Naive thymus-derived CD4-positive, alpha-beta T cell (primary cell): ENCODE measurements at regions of chr22 and their contacts with region 1.

Region 1: GRCh38 chr22:37121887-37122591 is 12.5 kb upstream of the TMPRSS6 start:
- DNase-seq: peak; percentile 62 to 98 (median 94)
- ATAC-seq: peak; percentile 99
- H3K4me3 ChIP-seq: peak overlapping the region; percentile 30
- H3K4me3 Mint-ChIP-seq: peak overlapping the region; percentile 69 to 91 (median 79)
- H3K27ac ChIP-seq: peak overlapping the region; percentile 96
- H3K27ac Mint-ChIP-seq: peak overlapping the region; percentile 95 to 100 (median 98)
- H3K4me1 ChIP-seq: peaks cover 21 to 30% of the 10 kb centered on the region in 2 donors
- H3K4me1 Mint-ChIP-seq: peaks cover 19 to 86% (median 65%) of the 10 kb centered on the region in 7 donors
- H3K27me3 ChIP-seq: no peaks in the 10 kb centered on the region
- H3K27me3 Mint-ChIP-seq: peaks cover 0 to 2% (median 0%) of the 10 kb centered on the region in 5 donors

Region 2: GRCh38 chr22:37051391-37052385 is 70.4 kb before region 1 on chr22 and contains the start of gene KCTD17:
- CTCF ChIA-PET with region 1: no interaction called
- POLR2A ChIA-PET with region 1: no interaction called
- intact Hi-C with region 1: loop called in 1 of 2 experiments (anchors 2 kb)
- DNase-seq: peak; percentile 50 to 87 (median 67)
- ATAC-seq: peak; percentile 99
- H3K4me3 ChIP-seq: peak within 1 kb of the TSS; percentile 74
- H3K4me3 Mint-ChIP-seq: peak within 1 kb of the TSS; percentile 73 to 94 (median 86)
- H3K27ac ChIP-seq: peak within 1 kb of the TSS; percentile 72
- H3K27ac Mint-ChIP-seq: peak within 1 kb of the TSS in 8 of 9 donors; percentile 40 to 89 (median 80)
- H3K4me1 ChIP-seq: peaks cover 0 to 7% of the 10 kb centered on the region in 2 donors
- H3K4me1 Mint-ChIP-seq: peaks cover 5 to 15% (median 14%) of the 10 kb centered on the region in 7 donors
- H3K27me3 ChIP-seq: no peaks in the 10 kb centered on the region
- H3K27me3 Mint-ChIP-seq: no peaks in the 10 kb centered on the region
- total RNA-seq, gene KCTD17: 19.8 to 44.5 (median 24.9) TPM

Region 3: GRCh38 chr22:37098976-37099591 is 23.0 kb before region 1 on chr22:
- CTCF ChIA-PET with region 1: no interaction called
- POLR2A ChIA-PET with region 1: interaction called, 3 read pairs
- intact Hi-C with region 1: loop called in 1 of 2 experiments (anchors 1 kb)
- DNase-seq: no peak
- ATAC-seq: peak; percentile 48
- H3K4me3 ChIP-seq: no peak overlapping the region
- H3K4me3 Mint-ChIP-seq: no peak overlapping the region
- H3K27ac ChIP-seq: no peak overlapping the region
- H3K27ac Mint-ChIP-seq: peak overlapping the region in 5 of 9 donors; percentile 2 to 68 (median 41)
- H3K4me1 ChIP-seq: no peaks in the 10 kb centered on the region
- H3K4me1 Mint-ChIP-seq: peaks cover 0 to 38% (median 10%) of the 10 kb centered on the region in 7 donors
- H3K27me3 ChIP-seq: no peaks in the 10 kb centered on the region
- H3K27me3 Mint-ChIP-seq: peaks cover 0 to 27% (median 12%) of the 10 kb centered on the region in 5 donors

Region 4: DNA sequence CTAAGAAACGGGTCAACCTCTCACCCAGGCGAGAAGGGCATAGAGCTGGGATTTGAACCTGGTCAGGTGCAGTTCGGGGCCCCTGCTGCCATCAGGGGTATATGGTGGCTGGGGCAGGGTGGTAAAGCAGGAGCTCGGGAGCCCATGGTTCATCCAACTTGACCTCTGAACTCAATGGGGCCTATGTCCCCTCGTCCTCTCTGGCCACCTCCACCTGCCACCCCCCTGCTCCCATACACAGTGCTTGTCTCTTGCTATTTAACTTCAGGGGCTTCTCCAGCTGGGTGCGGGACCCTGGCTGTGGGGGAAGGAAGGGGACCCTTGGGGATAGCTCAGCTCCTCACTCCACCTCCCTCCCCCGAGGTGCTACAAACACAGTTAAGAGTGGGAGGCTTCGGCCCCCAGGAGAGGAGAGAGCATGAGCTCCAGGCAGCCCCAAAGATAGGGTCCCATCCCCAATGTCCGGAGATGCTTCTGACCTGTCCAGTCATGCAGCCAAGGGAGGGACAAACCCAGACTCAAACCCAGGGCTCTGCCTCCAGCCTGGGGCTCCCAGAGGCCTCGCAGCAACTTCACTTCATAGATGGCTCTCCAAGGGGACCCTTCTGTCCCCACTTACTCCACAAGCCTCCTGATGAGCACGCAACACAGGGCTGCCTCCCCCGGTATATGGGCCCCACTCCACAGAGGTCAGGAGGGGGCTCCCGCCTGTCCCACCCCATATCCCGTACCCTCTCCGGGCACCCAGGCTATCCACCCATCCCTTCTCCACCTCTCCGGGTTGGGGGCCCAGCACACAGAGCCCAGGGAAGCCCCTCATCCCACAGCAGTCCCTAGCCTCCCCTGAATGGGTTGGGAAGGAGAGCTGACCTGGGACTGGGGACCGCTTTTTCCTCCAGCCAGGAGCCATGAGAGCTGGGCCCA is 27.0 kb after region 1 on chr22:
- CTCF ChIA-PET with region 1: interaction called, 32 read pairs
- POLR2A ChIA-PET with region 1: interaction called, 61 read pairs
- intact Hi-C with region 1: loop called (anchors 1 kb)
- DNase-seq: peak in 1 of 9 donors; percentile 37
- ATAC-seq: no peak
- H3K4me3 ChIP-seq: peak overlapping the region; percentile 69
- H3K4me3 Mint-ChIP-seq: peak overlapping the region; percentile 70 to 91 (median 86)
- H3K27ac ChIP-seq: peak overlapping the region; percentile 84
- H3K27ac Mint-ChIP-seq: peak overlapping the region; percentile 92 to 99 (median 95)
- H3K4me1 ChIP-seq: peaks cover 40 to 46% of the 10 kb centered on the region in 2 donors
- H3K4me1 Mint-ChIP-seq: peaks cover 36 to 82% (median 64%) of the 10 kb centered on the region in 7 donors
- H3K27me3 ChIP-seq: no peaks in the 10 kb centered on the region
- H3K27me3 Mint-ChIP-seq: no peaks in the 10 kb centered on the region

Region 5: GRCh38 chr22:37282385-37282677 is 160.3 kb after region 1 on chr22 and contains the start of gene CYTH4:
- CTCF ChIA-PET with region 1: no interaction called
- POLR2A ChIA-PET with region 1: no interaction called
- intact Hi-C with region 1: no loop called
- DNase-seq: peak; percentile 48 to 76 (median 67)
- ATAC-seq: peak; percentile 78
- H3K4me3 ChIP-seq: peak within 1 kb of the TSS; percentile 89
- H3K4me3 Mint-ChIP-seq: peak within 1 kb of the TSS; percentile 90 to 98 (median 96)
- H3K27ac ChIP-seq: peak within 1 kb of the TSS; percentile 85
- H3K27ac Mint-ChIP-seq: peak within 1 kb of the TSS; percentile 90 to 99 (median 98)
- H3K4me1 ChIP-seq: peaks cover 16 to 27% of the 10 kb centered on the region in 2 donors
- H3K4me1 Mint-ChIP-seq: peaks cover 41 to 83% (median 62%) of the 10 kb centered on the region in 7 donors
- H3K27me3 ChIP-seq: no peaks in the 10 kb centered on the region
- H3K27me3 Mint-ChIP-seq: no peaks in the 10 kb centered on the region
- total RNA-seq, gene CYTH4: 123 to 227 (median 214) TPM